ENCODE measurements at regions of chr15 and their contacts with region 1.

Region 1: GRCh38 chr15:29522373-29523276 is 253.0 kb upstream of the NSMCE3 start:
- DNase-seq: peak; percentile 44
- H3K4me3 Mint-ChIP-seq: no peak overlapping the region
- H3K27ac Mint-ChIP-seq: no peak overlapping the region
- H3K4me1 Mint-ChIP-seq: peaks cover 12% of the 10 kb centered on the region
- H3K27me3 Mint-ChIP-seq: peaks cover 19% of the 10 kb centered on the region
- CTCF ChIP-seq: no peak

Region 2: GRCh38 chr15:29470311-29471193 is 52.1 kb before region 1 on chr15:
- CTCF ChIA-PET with region 1: no interaction called
- POLR2A ChIA-PET with region 1: interaction called, 10 read pairs
- intact Hi-C with region 1: no loop called
- DNase-seq: peak; percentile 60
- H3K4me3 Mint-ChIP-seq: peak overlapping the region; percentile 46
- H3K27ac Mint-ChIP-seq: peak overlapping the region; percentile 87
- H3K4me1 Mint-ChIP-seq: peaks cover 18% of the 10 kb centered on the region
- H3K27me3 Mint-ChIP-seq: no peaks in the 10 kb centered on the region
- CTCF ChIP-seq: no peak

Measured in MCF 10A (cell line).